CD4-positive, alpha-beta memory T cell (primary cell): ENCODE measurements at regions of chrX and their contacts with region 1.

Region 1: DNA sequence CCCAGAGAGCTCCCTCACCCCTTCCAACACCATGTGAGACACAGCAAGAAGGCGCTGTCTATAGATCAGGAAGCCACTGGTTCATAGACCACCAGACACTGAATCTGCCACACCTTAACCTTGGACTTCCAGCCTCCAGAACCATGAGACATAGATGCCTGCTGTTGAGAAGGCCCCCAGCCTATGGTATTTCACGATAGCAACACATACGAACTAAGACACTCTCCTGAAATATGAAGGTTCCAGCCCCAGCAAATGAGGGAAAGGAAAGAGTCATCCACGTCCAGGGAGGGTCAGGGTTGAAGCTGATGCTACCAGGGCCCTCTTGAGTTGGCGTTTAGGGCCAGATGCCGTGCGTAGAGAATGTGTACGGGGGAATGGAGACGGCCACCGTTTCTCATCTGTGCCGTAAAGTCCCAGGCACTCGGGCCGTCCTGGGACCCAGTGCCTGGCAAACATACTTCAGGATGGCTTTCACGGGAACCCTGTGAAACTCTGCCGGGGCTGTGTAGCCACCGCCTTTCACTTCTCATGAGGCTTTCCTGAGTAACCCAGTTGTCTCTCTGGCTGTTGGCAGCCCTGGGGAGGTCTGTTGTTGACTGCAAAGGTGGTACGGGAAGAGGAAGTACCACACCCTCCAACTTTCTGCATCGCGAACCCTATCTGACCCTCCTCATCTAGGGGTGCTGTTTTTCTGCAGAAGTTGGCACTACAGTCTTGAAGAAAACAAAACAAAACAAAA is 17.7 kb upstream of the P2RY8 start:
- DNase-seq: peak; percentile 78 to 88 (median 82)
- H3K4me3 ChIP-seq: peak overlapping the region; percentile 24 to 33
- H3K4me3 Mint-ChIP-seq: peak overlapping the region; percentile 48 to 86 (median 79)
- H3K27ac ChIP-seq: peak overlapping the region; percentile 56
- H3K27ac Mint-ChIP-seq: peak overlapping the region; percentile 94 to 98 (median 98)
- H3K4me1 ChIP-seq: peaks cover 91% of the 10 kb centered on the region
- H3K4me1 Mint-ChIP-seq: peaks cover 44 to 85% (median 66%) of the 10 kb centered on the region in 4 donors
- H3K27me3 ChIP-seq: no peaks in the 10 kb centered on the region
- H3K27me3 Mint-ChIP-seq: no peaks in the 10 kb centered on the region

Region 2: GRCh38 chrX:1507511-1508463 is 46.9 kb before region 1 on chrX:
- CTCF ChIA-PET with region 1: no interaction called
- POLR2A ChIA-PET with region 1: no interaction called
- intact Hi-C with region 1: no loop called
- DNase-seq: peak in 4 of 5 donors; percentile 32 to 76 (median 47)
- H3K4me3 ChIP-seq: no peak overlapping the region
- H3K4me3 Mint-ChIP-seq: peak overlapping the region in 4 of 8 donors; percentile 15 to 71 (median 36)
- H3K27ac ChIP-seq: peak overlapping the region; percentile 31
- H3K27ac Mint-ChIP-seq: peak overlapping the region in 4 of 7 donors; percentile 6 to 91 (median 86)
- H3K4me1 ChIP-seq: peaks cover 45% of the 10 kb centered on the region
- H3K4me1 Mint-ChIP-seq: peaks cover 28 to 38% (median 33%) of the 10 kb centered on the region in 4 donors
- H3K27me3 ChIP-seq: no peaks in the 10 kb centered on the region
- H3K27me3 Mint-ChIP-seq: no peaks in the 10 kb centered on the region

Region 3: GRCh38 chrX:1564750-1565683 is 10.4 kb after region 1 on chrX:
- CTCF ChIA-PET with region 1: no interaction called
- POLR2A ChIA-PET with region 1: no interaction called
- intact Hi-C with region 1: loop called (anchors 2 kb)
- DNase-seq: no peak
- H3K4me3 ChIP-seq: no peak overlapping the region
- H3K4me3 Mint-ChIP-seq: peak overlapping the region in 7 of 8 donors; percentile 24 to 63 (median 47)
- H3K27ac ChIP-seq: no peak overlapping the region
- H3K27ac Mint-ChIP-seq: peak overlapping the region; percentile 57 to 75 (median 63)
- H3K4me1 ChIP-seq: peaks cover 52% of the 10 kb centered on the region
- H3K4me1 Mint-ChIP-seq: peaks cover 31 to 68% (median 50%) of the 10 kb centered on the region in 4 donors
- H3K27me3 ChIP-seq: no peaks in the 10 kb centered on the region
- H3K27me3 Mint-ChIP-seq: no peaks in the 10 kb centered on the region